WTC11 (cell line): ENCODE measurements at regions of chr19 and their contacts with region 1.

Region 1: DNA sequence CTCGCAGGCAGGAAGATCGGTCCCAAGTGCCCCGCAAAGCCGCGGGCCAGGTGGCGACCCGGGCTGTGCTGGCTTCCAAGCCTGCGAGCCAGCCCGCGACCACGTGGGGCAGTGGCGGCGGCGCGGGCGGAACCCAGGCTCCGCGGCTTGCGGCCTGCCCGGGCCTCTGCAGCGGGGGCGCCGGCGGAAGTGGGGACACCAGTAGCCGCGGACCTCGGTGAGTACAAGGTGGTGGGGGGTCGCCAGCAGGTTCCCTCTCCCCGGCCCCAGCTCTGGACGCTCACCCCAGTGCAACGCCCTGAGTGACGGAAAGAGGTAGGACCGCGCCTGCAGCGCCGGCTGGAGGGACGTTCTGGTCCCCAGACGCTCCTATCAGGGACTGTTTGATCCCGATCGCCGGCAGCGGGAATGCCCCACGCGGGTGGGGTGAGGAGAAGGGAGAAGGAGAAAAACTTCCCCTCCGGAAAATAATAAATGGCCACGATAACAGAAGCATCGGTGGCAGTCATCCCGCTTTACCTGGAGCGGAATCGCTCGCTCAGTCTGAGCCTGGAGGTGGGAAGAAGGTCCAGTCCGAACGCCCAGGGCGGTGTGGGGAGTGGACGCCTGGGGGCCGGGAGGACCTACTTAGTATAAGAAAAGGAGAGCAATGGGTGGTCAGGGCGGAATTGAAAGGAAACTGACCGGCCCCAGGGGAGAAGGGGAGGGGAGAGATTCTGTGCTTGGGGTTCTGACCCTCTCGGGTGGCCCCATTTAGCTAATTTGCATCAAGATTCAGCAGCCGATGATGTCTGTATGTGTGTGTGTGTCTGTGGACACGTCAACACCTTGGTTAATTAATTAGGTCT is at the start of gene GEMIN7:
- DNase-seq: peak; percentile 89
- ATAC-seq: peak; percentile 48
- H3K4me3 Mint-ChIP-seq: peak within 1 kb of the TSS; percentile 99
- H3K27ac Mint-ChIP-seq: peak within 1 kb of the TSS; percentile 99
- H3K4me1 Mint-ChIP-seq: peaks cover 52% of the 10 kb centered on the region
- H3K27me3 Mint-ChIP-seq: no peaks in the 10 kb centered on the region
- CTCF ChIP-seq: no peak
- total RNA-seq, gene GEMIN7: 55.0 to 60.3 TPM (median 55.3 TPM) in 3 replicates

Region 2: DNA sequence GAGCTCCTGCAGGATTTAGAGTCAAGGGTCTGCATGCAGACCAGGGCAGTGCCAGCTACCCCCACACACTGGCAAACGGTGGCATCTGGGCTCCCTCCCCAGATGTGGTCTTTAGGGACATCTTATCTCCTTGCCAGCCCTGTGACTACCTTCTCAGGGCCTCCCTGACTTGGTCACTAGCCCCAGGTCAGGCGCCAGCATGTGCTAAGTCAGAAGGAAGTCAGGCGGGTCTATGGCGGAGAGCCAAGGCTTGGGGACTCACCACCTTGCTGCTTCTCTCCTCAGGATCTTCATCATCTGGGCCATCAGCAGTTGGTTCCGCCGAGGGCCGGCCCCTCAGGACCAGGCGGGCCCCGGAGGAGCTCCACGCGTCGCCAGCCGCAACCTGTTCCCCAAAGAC is 106.5 kb before region 1 on chr19:
- CTCF ChIA-PET with region 1: no interaction called
- POLR2A ChIA-PET with region 1: no interaction called
- DNase-seq: no peak
- ATAC-seq: no peak
- H3K4me3 Mint-ChIP-seq: no peak overlapping the region
- H3K27ac Mint-ChIP-seq: no peak overlapping the region
- H3K4me1 Mint-ChIP-seq: no peaks in the 10 kb centered on the region
- H3K27me3 Mint-ChIP-seq: no peaks in the 10 kb centered on the region
- CTCF ChIP-seq: no peak

Region 3: DNA sequence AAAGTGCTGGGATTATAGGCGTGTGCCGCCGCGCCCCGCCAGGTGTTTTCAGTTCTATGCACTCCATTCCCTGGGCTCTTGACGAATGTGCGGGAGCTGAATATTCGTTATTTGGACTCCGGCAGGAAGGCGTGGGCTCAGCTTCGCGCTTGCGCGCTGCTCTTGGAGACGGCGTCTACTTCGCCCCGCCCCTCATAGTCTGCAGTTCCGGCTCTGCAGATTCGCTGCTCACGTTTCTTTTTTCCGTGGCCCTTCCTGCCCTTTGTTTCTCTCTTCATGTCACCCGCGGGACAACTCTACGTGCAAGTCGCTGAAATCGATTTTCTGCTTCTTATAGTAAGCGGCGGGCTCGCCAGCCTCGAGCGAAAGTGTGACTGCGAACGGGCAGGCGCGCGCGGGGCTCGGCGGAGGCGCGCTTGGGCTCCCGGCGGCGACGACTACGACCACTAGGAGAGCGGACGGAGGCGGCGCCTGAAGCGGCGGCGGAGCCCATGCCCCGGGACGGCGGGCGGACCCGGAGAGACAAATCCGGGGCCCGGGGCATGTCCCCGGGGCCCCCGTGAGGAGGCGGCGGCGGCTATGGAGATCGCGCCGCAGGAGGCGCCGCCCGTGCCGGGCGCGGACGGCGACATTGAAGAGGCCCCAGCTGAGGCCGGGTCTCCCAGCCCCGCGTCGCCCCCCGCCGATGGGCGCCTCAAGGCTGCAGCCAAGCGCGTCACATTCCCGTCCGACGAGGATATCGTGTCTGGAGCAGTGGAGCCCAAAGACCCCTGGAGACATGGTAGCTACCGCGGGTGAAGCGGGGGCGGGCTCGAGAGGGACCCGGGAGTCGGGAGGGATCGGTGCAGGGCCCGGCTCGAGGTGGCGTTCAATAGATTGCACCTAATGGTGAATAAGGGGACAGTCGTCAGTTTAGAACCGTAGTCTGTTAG is 13.7 kb after region 1 on chr19 and contains the start of gene PPP1R37:
- CTCF ChIA-PET with region 1: interaction called, 23 read pairs
- POLR2A ChIA-PET with region 1: interaction called, 36 read pairs
- DNase-seq: peak; percentile 93
- ATAC-seq: peak; percentile 52
- H3K4me3 Mint-ChIP-seq: peak within 1 kb of the TSS; percentile 84
- H3K27ac Mint-ChIP-seq: peak within 1 kb of the TSS; percentile 100
- H3K4me1 Mint-ChIP-seq: peaks cover 57% of the 10 kb centered on the region
- H3K27me3 Mint-ChIP-seq: no peaks in the 10 kb centered on the region
- CTCF ChIP-seq: no peak
- total RNA-seq, gene PPP1R37: 34.5 to 35.9 TPM (median 35.4 TPM) in 3 replicates

Region 4: GRCh38 chr19:45119621-45120020 is 40.3 kb after region 1 on chr19:
- CTCF ChIA-PET with region 1: no interaction called
- POLR2A ChIA-PET with region 1: no interaction called
- DNase-seq: no peak
- ATAC-seq: no peak
- H3K4me3 Mint-ChIP-seq: no peak overlapping the region
- H3K27ac Mint-ChIP-seq: no peak overlapping the region
- H3K4me1 Mint-ChIP-seq: peaks cover 10% of the 10 kb centered on the region; the same call in 1 of the 2 replicates
- H3K27me3 Mint-ChIP-seq: no peaks in the 10 kb centered on the region
- CTCF ChIP-seq: no peak